Activated T-helper 2 cell treated with anti-CD3 and anti-CD28 coated beads, Interferon-gamma antibody, Interleukin-2, Interleukin-4, amounts not matched to agents 10 μg/mL and 5 μg/mL and 100 μg/mL, durations not matched to agents 14 hours and 24 hours and 36 hours (primary cell): ENCODE measurements at regions of chr3 and their contacts with region 1.

Region 1: GRCh38 chr3:152268555-152269425 is at the start of gene MBNL1:
- DNase-seq: peak; percentile 82
- H3K4me3 Mint-ChIP-seq: peak within 1 kb of the TSS; percentile 94
- H3K27ac Mint-ChIP-seq: peak within 1 kb of the TSS; percentile 96
- H3K4me1 Mint-ChIP-seq: peaks cover 54% of the 10 kb centered on the region
- H3K27me3 Mint-ChIP-seq: no peaks in the 10 kb centered on the region
- total RNA-seq, gene MBNL1: 230 and 244 TPM in 2 replicates

Region 2: DNA sequence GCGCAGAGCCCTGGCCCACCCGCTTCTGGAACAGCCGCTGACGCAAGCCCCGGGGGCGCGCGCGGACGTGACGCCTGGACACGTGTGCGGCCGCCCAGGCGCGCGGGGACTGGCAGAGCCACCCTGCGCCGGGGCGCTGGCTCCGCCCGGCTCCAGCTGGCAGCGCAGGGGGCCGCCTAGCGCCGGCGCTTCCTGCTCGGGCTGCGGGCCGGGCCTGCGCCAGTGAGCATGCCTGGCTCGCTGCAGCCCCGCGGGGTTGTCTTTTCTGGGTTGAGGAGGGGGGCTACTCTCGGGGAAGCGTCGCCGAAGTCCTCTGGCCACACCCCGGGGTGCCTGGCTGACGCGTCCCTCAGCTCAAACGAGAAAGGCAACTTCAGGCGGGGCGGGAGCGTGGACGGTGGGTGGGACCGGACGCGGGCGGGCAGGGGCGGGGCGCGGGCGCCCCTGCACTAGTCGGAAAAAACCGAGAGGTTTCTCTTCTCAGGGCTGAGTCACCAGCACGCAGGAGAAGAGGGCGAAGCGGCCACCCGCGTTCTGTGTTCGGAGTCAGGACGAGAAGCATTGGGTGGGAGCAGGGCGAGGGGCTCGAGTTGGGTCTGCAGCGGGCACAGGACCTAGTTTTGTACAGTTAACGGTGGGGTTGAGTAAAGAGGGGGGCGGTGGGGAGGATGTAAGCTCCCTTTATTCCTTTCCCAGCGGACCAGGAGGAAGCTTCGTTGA is 1505.5 kb before region 1 on chr3 and contains the start of gene SIAH2:
- intact Hi-C with region 1: loop called (anchors 5 kb)
- DNase-seq: peak; percentile 91
- H3K4me3 Mint-ChIP-seq: peak within 1 kb of the TSS; percentile 100
- H3K27ac Mint-ChIP-seq: peak within 1 kb of the TSS; percentile 100
- H3K4me1 Mint-ChIP-seq: peaks cover 50% of the 10 kb centered on the region
- H3K27me3 Mint-ChIP-seq: no peaks in the 10 kb centered on the region
- total RNA-seq, gene SIAH2: 108 and 116 TPM in 2 replicates

Region 3: DNA sequence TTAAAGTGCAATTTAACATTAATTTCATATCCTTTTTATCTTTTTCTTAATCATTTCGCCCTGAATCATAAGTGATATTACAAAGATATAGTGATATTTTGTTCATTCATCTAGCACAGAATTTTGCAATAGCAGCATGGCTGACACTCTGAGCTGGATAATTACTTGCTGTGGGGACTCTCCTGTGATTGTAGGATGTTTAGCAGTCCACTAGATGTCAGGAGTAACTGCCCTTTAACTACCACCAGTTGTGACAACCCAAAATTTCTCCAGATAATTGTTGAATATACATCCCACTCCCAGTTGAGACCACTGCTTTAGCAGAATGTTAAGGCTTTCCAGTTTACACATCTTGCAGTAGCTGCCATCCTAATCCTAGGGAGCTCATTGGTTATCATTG is 196.9 kb before region 1 on chr3:
- intact Hi-C with region 1: loop called (anchors 5 kb)
- DNase-seq: no peak
- H3K4me3 Mint-ChIP-seq: no peak overlapping the region
- H3K27ac Mint-ChIP-seq: no peak overlapping the region
- H3K4me1 Mint-ChIP-seq: peaks cover 5% of the 10 kb centered on the region
- H3K27me3 Mint-ChIP-seq: peaks cover 3% of the 10 kb centered on the region

Region 4: GRCh38 chr3:152205097-152205593 is 63.6 kb before region 1 on chr3:
- intact Hi-C with region 1: loop called (anchors 2 kb)
- DNase-seq: no peak
- H3K4me3 Mint-ChIP-seq: peak overlapping the region; percentile 86
- H3K27ac Mint-ChIP-seq: peak overlapping the region; percentile 88
- H3K4me1 Mint-ChIP-seq: peaks cover 73% of the 10 kb centered on the region
- H3K27me3 Mint-ChIP-seq: no peaks in the 10 kb centered on the region

Region 5: DNA sequence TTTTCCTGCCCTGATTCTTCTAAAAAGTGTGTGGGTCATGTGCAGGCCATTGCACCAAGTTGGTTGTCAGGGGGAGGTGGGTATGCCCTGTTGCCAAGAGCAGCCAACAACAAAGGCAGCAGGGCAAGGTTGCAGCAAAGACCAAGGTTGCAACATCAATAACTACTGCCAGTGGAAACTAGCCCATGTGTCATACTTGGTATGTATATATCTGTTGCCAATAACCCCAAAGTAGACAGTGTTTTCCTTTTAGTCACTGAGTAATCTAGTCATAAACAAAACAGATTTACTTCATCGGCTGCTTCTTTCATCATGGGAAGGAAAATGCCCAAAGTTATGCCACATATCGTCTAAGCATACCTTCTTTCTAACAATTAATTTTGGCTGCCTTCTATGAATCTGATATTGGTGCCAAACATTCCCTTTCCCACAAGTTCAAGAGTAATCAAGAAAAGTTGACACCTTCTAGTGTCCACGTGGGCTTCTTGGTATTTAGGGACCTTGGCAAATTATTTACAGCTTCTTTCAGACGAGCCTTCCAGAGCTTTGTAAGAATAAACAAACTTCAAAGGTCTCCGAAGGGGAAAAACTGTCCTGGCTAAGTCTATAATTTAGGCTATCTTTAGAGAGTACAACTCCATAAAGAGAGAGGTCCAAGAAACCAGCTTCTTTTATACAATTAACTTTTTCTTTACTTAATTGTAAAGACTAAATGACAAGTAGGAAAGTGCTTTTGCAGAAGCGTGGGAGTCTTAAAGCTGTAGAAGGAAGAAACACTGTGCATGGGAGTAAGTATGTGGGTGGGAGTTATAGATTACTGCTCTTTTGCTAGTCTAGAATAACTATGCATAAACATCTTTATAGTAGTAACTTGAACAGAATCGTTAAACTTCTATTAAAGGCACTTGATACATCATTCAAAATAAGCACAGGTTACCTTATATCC is 10.1 kb before region 1 on chr3:
- intact Hi-C with region 1: loop called (anchors 1 kb)
- DNase-seq: peak; percentile 49
- H3K4me3 Mint-ChIP-seq: peak overlapping the region; percentile 74
- H3K27ac Mint-ChIP-seq: peak overlapping the region; percentile 97
- H3K4me1 Mint-ChIP-seq: peaks cover 78% of the 10 kb centered on the region
- H3K27me3 Mint-ChIP-seq: no peaks in the 10 kb centered on the region

Region 6: GRCh38 chr3:152298393-152299242 is 29.8 kb after region 1 on chr3:
- intact Hi-C with region 1: loop called (anchors 1 kb)
- DNase-seq: peak; percentile 47
- H3K4me3 Mint-ChIP-seq: peak overlapping the region; percentile 78
- H3K27ac Mint-ChIP-seq: peak overlapping the region; percentile 97
- H3K4me1 Mint-ChIP-seq: peaks cover 66% of the 10 kb centered on the region
- H3K27me3 Mint-ChIP-seq: no peaks in the 10 kb centered on the region

Region 7: DNA sequence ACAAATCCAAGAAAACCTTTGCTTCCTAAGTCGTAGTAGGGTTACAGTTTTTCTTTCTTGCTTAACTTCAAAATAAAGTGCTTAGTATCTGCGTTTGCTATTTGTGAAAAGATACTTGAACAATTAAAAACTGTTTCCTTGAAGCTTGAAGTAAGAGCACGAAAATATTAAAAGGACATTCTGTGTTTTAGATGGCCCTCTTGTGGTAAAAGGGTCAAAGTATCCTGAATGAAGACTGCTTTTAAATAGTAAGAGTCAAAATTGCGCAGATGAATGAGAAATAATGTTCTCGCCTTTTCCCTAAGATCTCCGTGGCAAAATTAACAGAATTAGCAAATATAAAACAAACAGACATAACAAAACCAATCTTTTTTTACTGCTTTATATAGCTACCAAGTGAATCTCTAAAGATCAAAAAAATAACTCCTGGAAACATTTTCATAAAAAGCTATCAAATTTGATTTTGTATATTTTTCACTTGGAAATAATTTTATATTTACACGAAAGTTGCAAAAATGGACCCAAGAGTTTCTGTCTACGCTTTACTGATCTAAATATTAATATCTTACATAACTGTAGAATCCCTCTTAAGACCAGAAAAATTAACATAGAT is 175.3 kb after region 1 on chr3:
- intact Hi-C with region 1: loop called (anchors 5 kb)
- DNase-seq: no peak
- H3K4me3 Mint-ChIP-seq: no peak overlapping the region
- H3K27ac Mint-ChIP-seq: peak overlapping the region; percentile 14
- H3K4me1 Mint-ChIP-seq: peaks cover 51% of the 10 kb centered on the region
- H3K27me3 Mint-ChIP-seq: no peaks in the 10 kb centered on the region